ENCODE measurements at regions of chr2 and their contacts with region 1.

Region 1: DNA sequence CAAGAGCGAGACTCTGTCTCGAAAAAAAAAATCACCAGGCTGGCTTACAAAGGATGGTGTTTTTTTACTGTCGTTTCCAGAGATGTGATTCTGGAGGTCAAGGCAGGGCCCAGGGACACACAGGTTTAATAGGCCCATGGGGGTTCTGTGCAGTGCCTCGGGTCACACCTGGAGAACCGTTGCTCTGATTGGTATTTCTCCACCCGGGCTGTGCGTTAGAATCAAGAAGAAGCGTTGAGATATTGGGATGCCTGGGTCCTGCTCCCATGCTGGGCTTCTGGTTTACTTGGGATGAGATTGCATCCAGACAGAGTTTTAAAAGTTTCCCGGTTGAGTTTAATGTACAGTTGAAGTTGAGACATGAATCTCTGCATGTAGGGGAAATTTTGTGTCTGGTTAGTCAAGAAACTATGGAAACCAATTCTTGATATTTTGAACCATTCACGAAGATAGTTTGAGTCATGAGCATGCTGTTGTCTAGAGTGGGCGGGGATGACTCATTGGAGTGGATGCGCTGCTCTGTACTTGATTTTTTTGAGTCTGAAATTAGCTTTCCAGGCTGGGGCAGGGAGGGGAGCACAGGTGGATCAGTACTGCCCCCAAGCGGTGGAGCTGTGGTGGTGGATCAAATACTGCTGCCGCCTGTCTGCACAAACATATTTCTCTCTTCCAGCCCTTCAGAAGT is 50.1 kb downstream of the GREB1 start:
- DNase-seq: peak in 4 of 5 donors; percentile 64 to 80 (median 74)
- ATAC-seq: peak; percentile 38 to 86 (median 74)
- H3K4me3 ChIP-seq: no peak overlapping the region
- H3K27ac ChIP-seq: peak overlapping the region in 7 of 12 donors; percentile 11 to 74 (median 34)
- H3K4me1 ChIP-seq: peaks cover 0 to 18% (median 6%) of the 10 kb centered on the region in 12 donors
- H3K27me3 ChIP-seq: no peaks in the 10 kb centered on the region
- CTCF ChIP-seq: peak; percentile 58 to 83 (median 76)
- POLR2A ChIP-seq: no peak

Region 2: GRCh38 chr2:11234309-11234708 is 349.7 kb before region 1 on chr2:
- intact Hi-C with region 1: loop called in 2 of 10 experiments (anchors 10 kb)
- DNase-seq: no peak
- ATAC-seq: peak in 2 of 4 donors; percentile 49 to 59
- H3K4me3 ChIP-seq: no peak overlapping the region
- H3K27ac ChIP-seq: no peak overlapping the region
- H3K4me1 ChIP-seq: peaks cover 0 to 26% (median 12%) of the 10 kb centered on the region in 12 donors
- H3K27me3 ChIP-seq: no peaks in the 10 kb centered on the region
- CTCF ChIP-seq: peak; percentile 35 to 79 (median 62)
- POLR2A ChIP-seq: no peak

Region 3: GRCh38 chr2:11477994-11478393 is 106.0 kb before region 1 on chr2:
- intact Hi-C with region 1: loop called (anchors 1 to 2 kb)
- DNase-seq: peak; percentile 84 to 94 (median 86)
- ATAC-seq: peak; percentile 25 to 77 (median 62)
- H3K4me3 ChIP-seq: no peak overlapping the region
- H3K27ac ChIP-seq: no peak overlapping the region
- H3K4me1 ChIP-seq: peaks cover 0 to 10% (median 0%) of the 10 kb centered on the region in 12 donors
- H3K27me3 ChIP-seq: peaks cover 0 to 32% (median 0%) of the 10 kb centered on the region in 9 donors
- CTCF ChIP-seq: peak; percentile 80 to 97 (median 92)
- POLR2A ChIP-seq: no peak

Region 4: GRCh38 chr2:11498543-11499080 is 85.4 kb before region 1 on chr2:
- intact Hi-C with region 1: loop called in 2 of 10 experiments (anchors 5 kb)
- DNase-seq: peak; percentile 89 to 95 (median 90)
- ATAC-seq: peak; percentile 95 to 97 (median 96)
- H3K4me3 ChIP-seq: no peak overlapping the region
- H3K27ac ChIP-seq: peak overlapping the region in 11 of 12 donors; percentile 19 to 91 (median 82)
- H3K4me1 ChIP-seq: peaks cover 0 to 28% (median 16%) of the 10 kb centered on the region in 12 donors
- H3K27me3 ChIP-seq: peaks cover 0 to 4% (median 0%) of the 10 kb centered on the region in 9 donors
- CTCF ChIP-seq: peak in 1 of 12 donors; percentile 8
- POLR2A ChIP-seq: peak in 1 of 2 donors; percentile 26

Region 5: GRCh38 chr2:11598228-11598731 is 14.3 kb after region 1 on chr2:
- intact Hi-C with region 1: no loop called
- DNase-seq: no peak
- ATAC-seq: no peak
- H3K4me3 ChIP-seq: no peak overlapping the region
- H3K27ac ChIP-seq: no peak overlapping the region
- H3K4me1 ChIP-seq: no peaks in the 10 kb centered on the region
- H3K27me3 ChIP-seq: no peaks in the 10 kb centered on the region
- CTCF ChIP-seq: no peak
- POLR2A ChIP-seq: no peak

Region 6: GRCh38 chr2:11642974-11643373 is 59.0 kb after region 1 on chr2:
- intact Hi-C with region 1: no loop called
- DNase-seq: no peak
- ATAC-seq: no peak
- H3K4me3 ChIP-seq: no peak overlapping the region
- H3K27ac ChIP-seq: no peak overlapping the region
- H3K4me1 ChIP-seq: no peaks in the 10 kb centered on the region
- H3K27me3 ChIP-seq: no peaks in the 10 kb centered on the region
- CTCF ChIP-seq: no peak
- POLR2A ChIP-seq: no peak

Region 7: DNA sequence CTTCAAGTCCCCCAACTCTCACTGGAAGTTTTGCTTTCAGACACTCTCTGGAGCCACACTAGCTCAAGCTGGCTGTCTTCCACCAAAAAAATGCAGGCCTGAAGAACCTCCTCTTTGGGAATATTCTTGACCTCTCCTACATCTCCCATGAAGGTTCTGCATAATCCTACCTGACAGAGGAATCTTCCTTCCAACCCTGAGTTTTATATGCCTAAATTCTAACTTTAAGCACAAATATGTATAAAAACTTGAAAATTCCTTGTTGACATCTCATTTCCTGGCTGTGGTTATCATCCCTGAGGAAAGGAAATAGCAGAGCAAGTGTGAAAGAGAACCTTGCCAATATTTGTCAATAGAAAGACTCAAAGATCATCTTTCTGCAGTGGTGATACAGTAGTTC is 411.5 kb after region 1 on chr2:
- intact Hi-C with region 1: no loop called
- DNase-seq: no peak
- ATAC-seq: no peak
- H3K4me3 ChIP-seq: no peak overlapping the region
- H3K27ac ChIP-seq: no peak overlapping the region
- H3K4me1 ChIP-seq: peaks cover 0 to 8% (median 0%) of the 10 kb centered on the region in 12 donors
- H3K27me3 ChIP-seq: no peaks in the 10 kb centered on the region
- CTCF ChIP-seq: no peak
- POLR2A ChIP-seq: no peak

Region 8: GRCh38 chr2:12897181-12897580 is 1313.2 kb after region 1 on chr2:
- intact Hi-C with region 1: no loop called
- DNase-seq: no peak
- ATAC-seq: no peak
- H3K4me3 ChIP-seq: no peak overlapping the region
- H3K27ac ChIP-seq: peak overlapping the region in 2 of 12 donors; percentile 37 to 48
- H3K4me1 ChIP-seq: peaks cover 0 to 8% (median 0%) of the 10 kb centered on the region in 12 donors
- H3K27me3 ChIP-seq: no peaks in the 10 kb centered on the region
- CTCF ChIP-seq: no peak
- POLR2A ChIP-seq: no peak